Esophagus squamous epithelium (tissue), 5 donors: ENCODE measurements at regions of chr4 and their contacts with region 1.

Region 1: GRCh38 chr4:39977489-39978377 is at the start of gene PDS5A:
- DNase-seq: peak; percentile 51
- H3K4me3 ChIP-seq: peak within 1 kb of the TSS; percentile 79 to 99 (median 98)
- H3K27ac ChIP-seq: peak within 1 kb of the TSS; percentile 96 to 99 (median 98)
- H3K4me1 ChIP-seq: peaks cover 0 to 47% (median 20%) of the 10 kb centered on the region in 3 donors
- H3K27me3 ChIP-seq: no peaks in the 10 kb centered on the region
- CTCF ChIP-seq: peak; percentile 80 to 100 (median 96)
- POLR2A ChIP-seq: peak in 2 of 4 donors; percentile 29 to 55
- total RNA-seq, gene PDS5A: 49.1 to 70.2 (median 59.6) TPM

Region 2: GRCh38 chr4:39469429-39470077 is 508.2 kb before region 1 on chr4:
- intact Hi-C with region 1: loop called (anchors 10 kb)
- DNase-seq: no peak
- H3K4me3 ChIP-seq: no peak overlapping the region
- H3K27ac ChIP-seq: peak overlapping the region; percentile 58 to 85 (median 64)
- H3K4me1 ChIP-seq: peaks cover 6 to 41% (median 6%) of the 10 kb centered on the region in 3 donors
- H3K27me3 ChIP-seq: no peaks in the 10 kb centered on the region
- CTCF ChIP-seq: peak; percentile 79 to 89 (median 83)
- POLR2A ChIP-seq: no peak

Region 3: DNA sequence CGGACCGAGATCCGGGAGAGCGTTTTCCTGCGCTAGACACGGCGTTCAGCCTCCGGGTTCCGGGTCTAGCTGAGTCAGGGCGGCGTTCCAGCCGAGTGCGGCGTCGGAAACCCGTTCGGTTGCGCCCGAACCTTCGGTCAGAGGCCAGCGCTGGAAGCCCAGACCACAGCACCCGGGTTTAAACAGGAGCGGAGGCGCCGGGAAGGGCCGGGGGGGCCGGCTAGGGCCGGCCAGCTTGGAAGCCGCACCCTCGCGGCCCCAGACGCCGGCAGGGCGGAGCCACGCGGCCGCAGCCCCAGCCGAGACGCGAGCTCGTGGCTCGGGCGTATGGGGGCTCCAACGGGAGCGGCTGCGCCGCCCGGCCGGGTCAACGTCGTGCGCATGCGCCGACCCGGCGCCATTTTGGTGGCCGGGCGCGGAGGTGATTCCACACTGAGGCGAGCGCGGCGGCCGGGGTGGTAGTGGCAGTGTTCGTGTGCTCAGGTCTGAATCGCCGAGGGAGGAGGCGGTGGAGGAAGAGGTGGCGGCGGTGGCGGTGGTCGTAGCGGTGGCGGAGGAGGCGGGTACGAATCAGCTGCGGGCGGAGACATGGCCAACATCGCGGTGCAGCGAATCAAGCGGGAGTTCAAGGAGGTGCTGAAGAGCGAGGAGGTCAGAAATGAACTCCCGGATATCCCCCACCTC is 279.9 kb before region 1 on chr4 and contains the start of gene UBE2K:
- intact Hi-C with region 1: loop called (anchors 5 kb)
- DNase-seq: peak; percentile 55
- H3K4me3 ChIP-seq: peak within 1 kb of the TSS; percentile 75 to 95 (median 88)
- H3K27ac ChIP-seq: peak within 1 kb of the TSS; percentile 94 to 98 (median 96)
- H3K4me1 ChIP-seq: peaks cover 5 to 54% (median 17%) of the 10 kb centered on the region in 3 donors
- H3K27me3 ChIP-seq: no peaks in the 10 kb centered on the region
- CTCF ChIP-seq: peak in 2 of 6 experiments; percentile 8 to 30
- POLR2A ChIP-seq: peak in 3 of 4 donors; percentile 45 to 91 (median 74)
- total RNA-seq, gene UBE2K: 28.1 to 37.6 (median 35.3) TPM